A549 (cell line): ENCODE measurements at regions of chr20 and their contacts with region 1.

Region 1: GRCh38 chr20:35303735-35304491 is 11.7 kb upstream of the FAM83C start:
- DNase-seq: peak; percentile 89 to 92
- ATAC-seq: peak; percentile 52 to 73
- H3K4me3 ChIP-seq: no peak overlapping the region
- H3K27ac ChIP-seq: peak overlapping the region; percentile 95 to 96
- H3K4me1 ChIP-seq: peaks cover 68% of the 10 kb centered on the region
- CTCF ChIP-seq: peak; percentile 96
- EP300 ChIP-seq: no peak
- POLR2A ChIP-seq: no peak
- RAD21 ChIP-seq: peak; percentile 96 to 97

Region 2: DNA sequence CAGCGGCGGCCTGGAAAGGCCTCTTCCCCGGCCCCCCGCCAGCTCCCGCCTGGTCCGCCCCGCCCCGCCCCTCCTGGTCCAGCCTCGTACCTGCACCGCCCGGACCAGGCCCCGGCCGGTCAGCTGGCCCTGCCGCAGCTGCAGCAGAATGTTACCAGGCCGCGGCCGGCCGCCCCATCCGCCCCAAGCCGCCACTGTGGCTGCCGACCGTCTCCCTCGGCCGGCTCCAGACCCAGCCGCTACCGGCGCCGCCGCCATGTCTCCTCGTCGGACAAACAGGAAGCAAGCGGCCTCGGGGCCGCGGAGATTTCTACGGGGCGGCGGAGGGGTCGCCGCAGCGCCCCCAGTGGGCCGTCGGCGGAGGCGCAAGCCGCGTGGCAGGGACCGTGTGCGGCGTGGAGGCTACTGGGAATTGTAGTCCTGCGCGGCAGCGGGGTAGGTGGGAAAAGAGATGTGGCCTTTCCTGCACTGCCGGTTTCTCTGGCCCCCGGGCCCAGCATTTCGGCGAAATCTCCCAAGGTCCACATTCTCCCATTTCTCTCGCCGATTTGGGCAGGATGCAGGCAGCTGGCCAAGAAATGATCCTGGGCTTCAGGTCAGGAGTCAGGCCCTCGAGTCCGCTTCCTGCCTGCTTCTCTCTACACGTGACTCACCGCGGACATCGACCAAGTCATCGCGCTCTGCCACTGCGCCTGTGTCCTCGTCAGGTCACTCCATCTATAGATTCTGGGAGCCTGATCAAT is 211.2 kb before region 1 on chr20 and contains the start of gene TRPC4AP:
- CTCF ChIA-PET with region 1: interaction called, 10 read pairs
- POLR2A ChIA-PET with region 1: no interaction called
- DNase-seq: peak; percentile 69 to 91
- ATAC-seq: peak; percentile 94 to 95
- H3K4me3 ChIP-seq: peak within 1 kb of the TSS; percentile 61
- H3K27ac ChIP-seq: peak within 1 kb of the TSS; percentile 93 to 94
- H3K4me1 ChIP-seq: peaks cover 27% of the 10 kb centered on the region
- CTCF ChIP-seq: peak; percentile 89
- EP300 ChIP-seq: no peak
- POLR2A ChIP-seq: peak; percentile 61
- RAD21 ChIP-seq: peak; percentile 47 to 52
- polyA plus RNA-seq, gene TRPC4AP: 55.3 and 64.6 TPM in 2 replicates

Region 3: GRCh38 chr20:35277531-35278395 is 26.1 kb before region 1 on chr20 and contains the start of gene MMP24OS:
- CTCF ChIA-PET with region 1: interaction called, 37 read pairs
- POLR2A ChIA-PET with region 1: interaction called, 3 read pairs
- DNase-seq: peak; percentile 84 to 89
- ATAC-seq: peak; percentile 73 to 85
- H3K4me3 ChIP-seq: peak within 1 kb of the TSS; percentile 76
- H3K27ac ChIP-seq: peak within 1 kb of the TSS; percentile 98 to 99
- H3K4me1 ChIP-seq: peaks cover 31% of the 10 kb centered on the region
- CTCF ChIP-seq: no peak; the same call in 2 of the 3 replicates
- EP300 ChIP-seq: no peak
- POLR2A ChIP-seq: peak; percentile 90
- RAD21 ChIP-seq: peak in 1 of 2 experiments; percentile 21; a peak in 3 of 5 replicates
- polyA plus RNA-seq, gene MMP24OS: 13.6 and 17.2 TPM in 2 replicates

Region 4: DNA sequence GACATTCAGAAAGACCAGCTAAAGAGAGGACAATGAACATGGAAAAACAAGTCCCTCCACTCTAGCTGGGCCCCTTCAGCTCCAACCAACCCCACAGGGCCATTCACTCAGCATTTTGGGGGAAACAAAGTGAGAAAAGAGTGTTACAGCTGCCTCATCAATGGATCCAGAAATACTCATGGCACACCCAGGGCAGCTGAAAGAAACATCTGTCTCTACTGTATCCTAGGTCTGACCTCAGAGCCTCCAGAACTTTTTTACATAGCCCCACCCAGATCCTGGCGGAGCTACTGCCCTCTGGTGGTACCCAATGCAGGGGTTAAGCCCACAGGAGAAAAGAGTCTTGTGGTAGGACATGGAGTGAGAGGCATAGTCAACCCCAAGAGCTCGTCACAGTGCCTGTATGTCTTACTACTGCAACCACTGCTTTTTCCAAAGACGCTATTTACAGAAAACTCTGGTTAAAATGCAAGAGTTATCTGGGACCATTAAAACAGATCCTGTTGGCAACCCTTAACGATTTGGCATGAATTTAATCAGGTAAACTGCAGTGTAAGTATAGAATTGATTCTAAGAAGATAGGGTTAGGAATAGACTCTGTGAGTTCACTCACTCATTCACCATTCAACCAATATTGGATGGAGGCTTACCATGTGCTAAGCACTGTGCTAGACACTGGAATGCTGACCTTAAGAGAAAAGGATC is 25.7 kb after region 1 on chr20:
- CTCF ChIA-PET with region 1: interaction called, 157 read pairs
- POLR2A ChIA-PET with region 1: interaction called, 3 read pairs
- DNase-seq: peak; percentile 72 to 84
- ATAC-seq: peak; percentile 86 to 91
- H3K4me3 ChIP-seq: no peak overlapping the region
- H3K27ac ChIP-seq: peak overlapping the region; percentile 77 to 82
- H3K4me1 ChIP-seq: peaks cover 47% of the 10 kb centered on the region
- CTCF ChIP-seq: peak; percentile 84
- EP300 ChIP-seq: no peak
- POLR2A ChIP-seq: no peak
- RAD21 ChIP-seq: peak; percentile 65 to 79

Region 5: DNA sequence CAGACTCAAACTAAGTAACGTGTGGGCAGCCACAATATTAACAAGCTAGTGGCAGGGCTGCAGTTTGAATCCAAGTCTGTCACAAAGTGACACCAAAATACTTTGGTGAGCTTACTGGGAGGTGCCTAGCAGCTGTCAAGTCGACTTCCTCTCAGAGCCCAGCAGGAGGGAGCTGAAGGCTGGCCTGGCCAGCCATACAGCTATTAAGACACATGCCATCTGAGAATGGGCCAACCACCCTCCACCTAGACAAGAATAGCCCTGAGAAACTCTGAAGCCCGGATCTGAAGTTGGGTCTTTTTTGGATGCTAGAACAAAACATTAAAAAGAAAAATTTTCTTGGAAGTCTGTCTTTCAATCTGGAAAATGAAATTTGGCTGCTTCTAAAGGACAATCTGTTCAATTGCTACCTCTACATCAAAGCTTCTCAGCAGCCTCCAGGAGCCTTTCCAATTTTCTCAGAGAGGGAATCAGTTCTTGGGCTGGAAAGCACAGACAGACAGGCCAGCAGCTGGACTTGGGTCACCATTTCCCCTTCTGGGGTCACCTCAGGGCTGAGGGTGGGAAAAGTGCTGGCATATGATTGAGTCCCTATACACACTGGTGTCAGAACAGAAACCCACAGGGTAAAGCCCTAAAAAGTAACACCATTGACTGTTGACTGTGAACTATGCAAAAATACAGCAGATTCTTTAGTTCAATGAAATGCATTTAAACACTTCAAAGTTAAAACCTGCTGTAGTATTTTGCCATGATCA is 64.9 kb after region 1 on chr20:
- CTCF ChIA-PET with region 1: interaction called, 12 read pairs
- POLR2A ChIA-PET with region 1: no interaction called
- DNase-seq: no peak
- ATAC-seq: no peak
- H3K4me3 ChIP-seq: no peak overlapping the region
- H3K27ac ChIP-seq: no peak overlapping the region
- H3K4me1 ChIP-seq: no peaks in the 10 kb centered on the region
- CTCF ChIP-seq: no peak
- EP300 ChIP-seq: no peak
- POLR2A ChIP-seq: no peak
- RAD21 ChIP-seq: no peak

Region 6: DNA sequence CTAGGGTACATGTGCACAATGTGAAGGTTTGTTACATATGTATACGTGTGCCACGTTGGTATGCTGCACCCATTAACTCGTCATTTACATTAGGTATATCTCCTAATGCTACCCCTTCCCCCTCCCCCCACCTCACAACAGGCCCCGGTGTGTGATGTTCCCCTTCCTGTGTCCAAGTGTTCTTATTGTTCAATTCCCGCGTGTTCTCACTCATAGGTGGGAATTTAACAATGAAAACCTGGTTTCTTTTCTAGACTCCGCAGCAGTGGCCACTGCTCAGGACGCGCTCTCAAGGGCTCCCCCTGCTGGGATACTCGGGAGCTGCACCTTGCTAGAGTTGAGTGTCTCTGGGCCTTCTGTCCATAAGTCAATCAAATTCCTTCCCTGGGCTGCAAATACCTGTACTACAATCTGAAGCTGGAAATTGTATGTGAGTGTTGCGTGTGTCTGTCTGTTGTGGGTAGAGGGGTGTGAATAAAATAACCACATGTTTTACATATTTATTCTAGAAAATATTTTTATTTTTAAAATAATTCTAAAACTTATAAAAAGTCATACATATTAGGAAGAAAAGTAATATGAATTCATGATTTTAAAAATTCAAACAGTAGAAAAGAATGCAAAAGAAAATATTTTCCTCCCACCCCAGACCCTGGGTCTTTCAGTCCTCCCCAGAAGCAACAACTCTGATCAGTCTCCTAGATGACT is 143.3 kb after region 1 on chr20:
- CTCF ChIA-PET with region 1: interaction called, 267 read pairs
- POLR2A ChIA-PET with region 1: interaction called, 4 read pairs
- DNase-seq: peak; percentile 77 to 86
- ATAC-seq: peak; percentile 95
- H3K4me3 ChIP-seq: peak overlapping the region; percentile 38
- H3K27ac ChIP-seq: peak overlapping the region; percentile 59 to 77
- H3K4me1 ChIP-seq: no peaks in the 10 kb centered on the region
- CTCF ChIP-seq: peak; percentile 84
- EP300 ChIP-seq: no peak
- POLR2A ChIP-seq: no peak
- RAD21 ChIP-seq: peak; percentile 71 to 73

Region 7: DNA sequence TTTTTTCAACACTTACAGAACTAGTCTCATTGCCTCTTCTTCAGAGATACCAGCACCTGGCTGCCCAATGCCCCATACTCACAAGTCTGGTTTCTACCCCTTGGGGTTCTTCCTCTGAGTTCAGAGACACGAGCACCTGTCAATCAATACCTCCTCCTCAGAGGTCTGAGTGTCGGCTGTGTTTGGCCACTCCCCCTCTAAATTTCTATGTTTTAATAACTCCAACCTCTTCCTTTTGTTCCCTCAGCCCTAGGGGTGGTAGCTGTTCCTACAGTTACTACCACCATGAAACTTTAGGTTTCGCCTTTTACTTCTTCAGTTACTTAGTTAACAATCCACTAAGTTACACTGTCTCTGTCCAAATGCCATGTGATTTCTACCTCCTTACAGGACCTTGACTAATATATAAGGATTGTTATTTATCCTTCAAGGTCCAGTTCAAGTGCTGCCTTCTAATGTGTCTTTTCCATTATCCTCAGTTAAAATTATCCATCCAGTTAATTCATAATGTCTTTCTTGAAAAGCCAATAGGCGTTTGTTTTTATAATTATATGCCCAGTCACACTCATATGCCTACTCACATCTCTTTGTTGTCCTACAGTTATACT is 453.3 kb after region 1 on chr20:
- CTCF ChIA-PET with region 1: no interaction called
- POLR2A ChIA-PET with region 1: no interaction called
- DNase-seq: no peak
- ATAC-seq: peak; percentile 30 to 63; a peak in 4 of 6 replicates
- H3K4me3 ChIP-seq: no peak overlapping the region
- H3K27ac ChIP-seq: no peak overlapping the region
- H3K4me1 ChIP-seq: no peaks in the 10 kb centered on the region
- CTCF ChIP-seq: no peak
- EP300 ChIP-seq: no peak
- POLR2A ChIP-seq: no peak
- RAD21 ChIP-seq: no peak